Posterior cingulate gyrus (tissue), 11 donors: ENCODE measurements at regions of chr6 and their contacts with region 1.

Region 1: DNA sequence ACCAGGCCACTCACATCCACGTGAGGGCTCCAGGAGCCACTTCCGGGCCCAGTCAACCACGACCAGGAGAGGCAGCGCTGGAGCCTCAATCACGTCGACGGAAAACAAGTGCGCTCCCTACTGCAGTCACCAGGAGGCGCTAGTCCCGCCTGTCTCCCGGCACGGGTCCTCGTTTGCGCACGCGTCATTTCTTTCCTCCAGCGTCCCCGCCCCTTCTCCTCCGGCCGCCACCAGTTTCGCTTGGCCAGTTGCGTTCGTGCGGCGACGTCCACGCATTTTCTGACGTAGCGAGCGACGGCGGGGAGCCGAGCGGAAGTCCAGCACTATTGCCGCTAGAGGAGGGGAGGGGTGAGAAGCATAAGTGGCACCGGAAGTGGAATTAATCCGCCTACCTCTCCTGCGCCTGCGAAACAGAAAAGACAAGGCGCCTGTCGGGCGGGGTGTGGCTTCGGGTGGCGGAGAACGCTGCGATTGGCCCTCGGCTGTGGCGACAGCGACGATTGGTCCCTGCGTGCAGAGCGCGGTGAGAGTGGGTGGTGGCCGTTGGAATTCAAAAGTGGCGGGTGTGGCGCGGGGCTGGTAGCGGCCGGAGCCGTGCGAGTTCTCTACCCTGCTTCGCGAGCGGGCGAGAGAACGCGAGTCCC is at the start of gene KIFC1:
- DNase-seq: peak; percentile 98 to 100 (median 99)

Region 2: DNA sequence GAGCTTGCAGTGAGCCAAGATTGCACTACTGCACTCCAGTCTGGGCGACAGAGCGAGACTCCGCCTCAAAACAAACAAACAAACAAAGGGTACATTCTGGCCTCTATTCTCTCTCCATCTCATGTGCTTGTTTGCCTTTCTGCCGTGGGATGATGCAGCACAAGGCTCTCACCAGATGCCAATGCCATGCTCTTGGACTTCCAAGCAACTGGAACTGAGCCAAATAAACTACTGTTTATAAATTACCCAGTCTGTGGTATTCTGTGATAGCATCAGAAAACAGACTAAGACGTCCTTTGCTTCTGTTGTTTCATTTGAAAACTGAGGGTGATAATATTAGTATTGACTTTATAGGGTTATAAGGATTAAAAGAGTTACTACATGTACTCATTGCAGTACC is 426.6 kb before region 1 on chr6:
- intact Hi-C with region 1: no loop called
- DNase-seq: no peak

Region 3: GRCh38 chr6:33299237-33299944 is 92.0 kb before region 1 on chr6:
- intact Hi-C with region 1: no loop called
- DNase-seq: peak; percentile 87 to 98 (median 91)

Region 4: DNA sequence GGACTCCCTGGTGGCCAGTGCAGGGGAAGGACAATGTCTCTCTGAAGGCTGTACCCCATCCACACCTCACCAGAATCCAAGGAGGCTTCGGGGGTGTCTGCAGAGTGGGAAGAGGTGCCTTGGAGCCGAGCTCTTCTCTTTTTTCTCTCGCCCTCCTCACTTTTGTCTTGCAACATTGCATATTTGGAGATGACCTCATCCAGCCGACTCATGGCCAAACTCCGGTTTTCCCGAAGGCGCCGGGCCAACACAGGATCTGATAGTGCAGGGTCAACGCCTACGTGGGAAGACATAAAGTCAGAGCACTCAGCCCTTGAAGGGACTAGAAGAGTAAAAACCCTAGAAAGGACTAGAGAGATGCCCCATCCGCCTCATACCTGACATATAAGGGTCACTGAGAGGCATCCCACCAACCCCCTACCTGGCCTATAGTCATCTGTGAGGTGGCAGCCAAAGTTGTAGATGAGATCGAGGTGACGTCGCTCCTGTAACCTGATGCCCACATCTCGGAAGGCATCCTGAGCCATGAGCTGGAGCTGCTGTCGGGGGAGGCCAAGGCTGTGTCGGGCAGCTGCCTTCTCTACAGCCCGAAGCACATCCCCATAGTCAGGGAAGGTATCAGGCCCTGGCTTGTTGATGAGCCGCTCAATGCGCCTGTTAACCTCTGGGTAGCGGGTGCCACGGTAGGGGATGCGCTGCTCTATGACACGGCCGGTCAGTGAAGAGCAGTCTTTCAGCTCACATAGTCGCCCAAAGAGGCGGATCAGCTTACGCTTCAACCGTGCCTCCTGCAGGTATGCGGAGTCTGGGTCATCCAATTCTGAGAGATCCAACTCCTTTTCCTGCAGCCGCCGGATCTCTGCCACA is 70.9 kb before region 1 on chr6:
- intact Hi-C with region 1: no loop called
- DNase-seq: peak in 1 of 10 donors; percentile 70

Region 5: DNA sequence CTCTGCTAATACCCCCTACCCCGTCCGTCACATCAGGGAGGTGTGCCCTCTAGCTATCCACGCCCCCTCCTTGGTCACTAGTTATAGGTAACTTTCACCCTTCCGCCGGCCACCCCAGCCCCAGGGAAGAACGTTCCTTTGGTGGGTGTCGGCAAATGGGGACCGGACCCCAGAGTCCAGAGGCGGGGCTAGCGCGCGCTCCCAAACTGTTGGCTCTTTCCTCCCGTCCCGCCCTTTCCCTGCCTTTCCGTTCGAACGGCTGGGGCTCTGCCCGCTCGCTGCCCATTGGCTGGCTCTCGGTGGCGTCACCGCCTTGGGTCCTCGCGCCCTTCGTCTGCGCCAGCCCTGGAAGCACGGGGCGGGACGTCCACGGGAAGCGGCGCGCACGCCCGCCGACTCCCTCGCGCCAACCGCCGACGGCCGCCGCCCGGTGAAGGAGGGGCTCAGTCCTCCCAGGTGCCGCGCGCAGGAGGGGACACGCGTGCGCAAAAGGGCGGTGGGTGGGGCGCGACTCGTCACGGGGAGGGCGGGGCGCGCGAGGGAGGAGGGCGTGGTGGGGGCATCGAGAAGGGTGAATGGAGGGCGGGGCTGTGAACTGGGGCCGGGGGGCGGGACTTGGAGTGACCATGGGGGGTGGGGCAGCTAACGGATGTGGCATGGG is 18.8 kb after region 1 on chr6:
- intact Hi-C with region 1: loop called (anchors 1 kb)
- DNase-seq: peak; percentile 92 to 100 (median 98)

Region 6: DNA sequence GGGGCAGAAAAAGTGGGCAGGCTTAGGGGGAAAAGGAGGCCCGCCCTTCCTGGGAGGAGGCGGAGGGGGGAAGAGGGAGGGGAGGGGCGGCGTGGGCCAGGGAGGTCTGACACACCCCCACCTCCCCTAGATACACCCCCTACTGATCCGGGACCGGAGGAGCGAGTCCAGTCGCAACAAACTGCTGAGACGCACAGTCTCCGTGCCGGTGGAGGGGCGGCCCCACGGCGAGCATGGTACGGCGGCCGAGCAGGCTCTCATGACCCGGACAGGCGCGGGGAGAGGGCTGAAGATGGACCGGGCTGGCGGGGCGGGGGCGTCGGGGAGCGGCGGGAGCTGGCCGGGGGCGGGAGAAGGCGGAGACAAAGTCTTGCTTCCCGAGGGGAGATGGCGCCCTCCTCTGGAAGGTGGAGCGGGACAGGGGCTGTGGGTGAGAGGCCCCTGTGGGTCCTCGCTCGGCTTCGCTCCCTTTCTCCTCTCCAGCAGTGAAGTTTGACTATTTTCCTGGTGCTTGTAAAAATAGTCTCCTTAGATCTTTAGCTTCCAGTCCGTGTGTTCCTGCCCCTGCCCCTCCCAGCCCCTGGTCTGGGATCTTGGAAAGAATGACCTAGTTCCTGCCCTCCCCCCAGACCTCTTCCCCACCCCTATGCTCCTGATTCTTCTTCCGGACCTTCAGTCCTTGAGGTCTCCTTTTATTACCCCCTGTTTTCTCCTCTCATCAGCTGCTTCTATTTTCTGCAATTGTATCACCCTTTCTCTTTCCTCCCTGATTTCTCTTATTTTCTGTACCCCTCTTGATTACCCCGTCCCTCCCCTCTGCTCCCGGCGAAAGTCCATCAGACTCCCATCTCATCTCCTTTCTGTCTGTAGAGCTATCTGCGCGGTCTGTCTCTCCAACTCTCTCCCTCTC is 34.5 kb after region 1 on chr6:
- intact Hi-C with region 1: loop called (anchors 5 kb)
- DNase-seq: peak; percentile 75 to 97 (median 82)

Region 7: DNA sequence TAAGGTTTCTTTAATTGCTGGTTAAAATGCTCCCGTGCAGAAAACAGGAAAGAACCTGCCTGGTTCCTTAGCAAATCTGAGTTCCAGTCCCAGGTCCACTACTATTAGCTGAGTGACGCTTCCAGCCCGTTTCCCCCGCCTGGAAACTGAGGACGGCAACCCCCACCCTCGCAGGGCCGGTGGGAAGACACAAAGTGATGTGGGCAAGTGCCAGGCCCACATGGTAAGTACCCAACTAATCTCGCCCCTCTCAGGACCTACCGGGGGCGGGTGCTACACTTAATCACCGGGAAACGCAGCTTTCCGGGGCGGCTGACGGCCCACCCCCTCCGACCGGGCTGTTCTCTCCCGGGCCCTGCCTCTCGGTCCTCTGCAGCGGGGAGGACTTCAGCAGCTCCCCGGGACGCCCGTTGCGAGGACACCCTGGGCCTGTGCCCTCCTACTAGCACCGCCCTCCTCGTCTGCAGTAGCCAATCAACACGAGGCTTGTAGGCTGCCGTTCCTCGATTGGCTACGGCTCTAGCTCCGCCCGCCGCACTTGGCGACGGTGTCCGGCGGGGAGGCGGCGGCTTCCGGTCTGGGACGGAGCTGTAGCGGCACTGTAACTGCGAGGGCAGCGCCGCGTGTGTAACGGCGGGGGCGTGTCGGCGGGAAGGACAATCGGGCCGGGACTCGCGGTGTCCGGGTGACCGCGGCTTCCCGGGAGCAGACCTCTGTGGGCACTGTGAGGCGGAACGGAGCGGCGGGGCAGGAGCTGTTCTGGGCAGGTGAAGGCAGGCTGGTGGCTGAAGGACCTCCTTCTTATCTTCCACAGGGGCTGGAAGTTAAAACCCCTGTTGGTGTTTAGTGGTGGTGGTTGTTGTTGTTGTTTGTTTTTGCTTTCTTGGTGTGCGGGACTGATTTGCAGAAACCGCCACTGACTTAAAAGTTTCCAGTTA is 62.9 kb after region 1 on chr6 and contains the start of gene ZBTB9:
- intact Hi-C with region 1: loop called (anchors 2 kb)
- DNase-seq: peak; percentile 94 to 100 (median 96)